Esophagus squamous epithelium (tissue), 5 donors: ENCODE measurements at regions of chr21 and their contacts with region 1.

Region 1: DNA sequence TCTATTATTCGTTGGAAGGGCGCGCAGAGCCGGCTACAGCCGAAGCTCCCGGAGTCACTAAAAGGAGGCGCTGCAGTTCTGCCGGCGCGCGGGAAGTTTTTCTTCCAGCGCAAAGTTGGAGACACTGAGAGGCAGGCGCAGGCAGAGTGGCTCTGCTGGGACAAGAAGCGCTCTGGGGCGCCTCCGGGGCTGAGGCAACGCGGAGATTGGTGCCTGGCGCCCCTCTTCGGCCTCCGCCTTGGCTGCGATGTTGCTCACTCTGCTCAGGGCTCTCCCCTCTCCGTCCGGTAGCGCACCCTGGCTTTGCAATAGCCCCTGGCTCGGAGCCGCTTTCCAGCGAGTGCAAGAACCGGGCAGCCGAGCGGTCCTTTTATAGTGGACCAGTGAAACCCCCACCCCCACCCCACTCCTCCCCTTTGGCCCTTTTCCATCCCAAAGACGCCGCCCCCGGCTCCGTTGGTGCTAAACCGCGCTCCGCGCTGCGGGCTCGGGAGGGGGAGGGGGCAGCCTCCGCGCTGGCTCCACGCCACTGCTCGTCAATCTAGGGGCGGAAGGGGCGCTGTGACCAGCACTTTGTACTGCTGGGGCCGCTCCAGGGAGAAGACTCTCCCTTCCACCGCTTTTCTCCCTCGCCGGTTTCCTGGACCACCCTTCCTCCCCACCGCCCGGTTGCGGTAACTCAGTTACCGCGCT is at the start of gene ADAMTS1:
- DNase-seq: no peak
- H3K4me3 ChIP-seq: peak within 1 kb of the TSS; percentile 62 to 85 (median 78)
- H3K27ac ChIP-seq: peak within 1 kb of the TSS; percentile 77 to 96 (median 94)
- H3K4me1 ChIP-seq: peaks cover 10 to 82% (median 14%) of the 10 kb centered on the region in 3 donors
- H3K27me3 ChIP-seq: peaks cover 0 to 48% (median 0%) of the 10 kb centered on the region in 4 donors
- CTCF ChIP-seq: peak in 1 of 6 experiments; percentile 8
- POLR2A ChIP-seq: peak in 2 of 4 donors; percentile 87 to 95
- total RNA-seq, gene ADAMTS1: 2.8 to 33.0 (median 19.3) TPM

Region 2: DNA sequence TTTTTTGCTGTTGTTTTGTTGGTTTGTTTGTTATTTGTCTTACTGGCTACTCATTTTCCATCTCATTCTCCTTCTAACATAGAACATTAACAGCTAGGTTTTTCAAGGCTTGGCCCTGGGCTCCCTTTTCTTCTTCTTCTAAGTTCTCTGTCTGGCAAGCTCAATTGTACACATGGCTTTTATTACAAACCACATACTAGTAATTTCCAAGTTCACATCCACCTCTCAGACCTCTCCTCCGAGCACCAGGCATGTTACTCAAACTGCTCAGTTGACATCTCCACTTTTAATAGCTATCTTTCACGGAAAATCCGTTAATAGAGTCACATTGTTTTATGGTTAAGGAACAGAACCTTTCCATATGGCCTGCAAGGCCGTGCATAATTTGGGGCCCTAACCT is 858.6 kb after region 1 on chr21:
- intact Hi-C with region 1: loop called (anchors 2 kb)
- DNase-seq: no peak
- H3K4me3 ChIP-seq: no peak overlapping the region
- H3K27ac ChIP-seq: peak overlapping the region in 2 of 4 donors; percentile 8 to 36
- H3K4me1 ChIP-seq: peaks cover 0 to 10% (median 0%) of the 10 kb centered on the region in 3 donors
- H3K27me3 ChIP-seq: no peaks in the 10 kb centered on the region
- CTCF ChIP-seq: no peak
- POLR2A ChIP-seq: no peak

Region 3: GRCh38 chr21:28745131-28746016 is 1900.2 kb after region 1 on chr21:
- intact Hi-C with region 1: loop called (anchors 5 kb)
- DNase-seq: no peak
- H3K4me3 ChIP-seq: peak overlapping the region; percentile 29 to 61 (median 49)
- H3K27ac ChIP-seq: peak overlapping the region; percentile 45 to 84 (median 80)
- H3K4me1 ChIP-seq: peaks cover 0 to 34% (median 8%) of the 10 kb centered on the region in 3 donors
- H3K27me3 ChIP-seq: no peaks in the 10 kb centered on the region
- CTCF ChIP-seq: peak; percentile 77 to 99 (median 90)
- POLR2A ChIP-seq: no peak